WTC11 (cell line): ENCODE measurements at regions of chr4 and their contacts with region 1.

Region 1: DNA sequence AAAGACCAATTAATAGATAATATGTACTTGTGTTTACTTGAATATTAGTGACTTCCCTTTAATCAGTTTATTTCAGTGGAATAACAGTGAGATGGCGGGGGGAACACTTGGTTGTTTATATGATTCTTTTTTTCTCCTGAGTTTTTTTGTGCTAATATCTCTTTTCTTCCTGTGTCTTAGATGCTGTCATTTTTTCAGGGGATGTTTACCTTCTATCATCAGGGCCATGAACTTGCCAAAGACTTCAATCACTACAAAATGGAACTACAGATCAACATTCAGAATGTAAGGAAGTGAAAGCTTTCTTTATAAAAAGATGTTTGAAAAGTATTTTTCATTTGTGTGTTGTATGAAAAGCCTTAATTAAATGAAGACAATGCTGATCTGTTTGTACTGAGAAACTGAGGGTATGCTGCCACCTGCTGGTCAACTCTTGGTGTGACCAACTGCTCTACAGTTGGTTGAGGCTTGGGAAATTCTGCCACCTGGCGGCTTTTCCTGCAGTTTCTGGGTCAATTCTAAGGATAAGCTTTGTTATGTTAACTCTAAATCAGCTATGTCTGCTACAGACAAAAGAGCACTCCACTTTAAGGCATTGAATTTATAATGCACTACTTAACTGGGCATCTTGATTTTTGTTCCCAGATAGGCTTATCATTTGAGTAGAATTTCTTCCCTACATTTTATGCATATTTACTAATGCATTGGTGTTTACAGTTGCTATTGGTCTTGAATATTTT is 134.8 kb downstream of the ARHGAP10 start:
- DNase-seq: peak; percentile 95
- ATAC-seq: peak; percentile 87
- H3K4me3 Mint-ChIP-seq: peak overlapping the region; percentile 0; the same call in 1 of the 2 replicates
- H3K27ac Mint-ChIP-seq: peak overlapping the region; percentile 75
- H3K4me1 Mint-ChIP-seq: peaks cover 43% of the 10 kb centered on the region
- H3K27me3 Mint-ChIP-seq: no peaks in the 10 kb centered on the region
- CTCF ChIP-seq: peak; percentile 97

Region 2: DNA sequence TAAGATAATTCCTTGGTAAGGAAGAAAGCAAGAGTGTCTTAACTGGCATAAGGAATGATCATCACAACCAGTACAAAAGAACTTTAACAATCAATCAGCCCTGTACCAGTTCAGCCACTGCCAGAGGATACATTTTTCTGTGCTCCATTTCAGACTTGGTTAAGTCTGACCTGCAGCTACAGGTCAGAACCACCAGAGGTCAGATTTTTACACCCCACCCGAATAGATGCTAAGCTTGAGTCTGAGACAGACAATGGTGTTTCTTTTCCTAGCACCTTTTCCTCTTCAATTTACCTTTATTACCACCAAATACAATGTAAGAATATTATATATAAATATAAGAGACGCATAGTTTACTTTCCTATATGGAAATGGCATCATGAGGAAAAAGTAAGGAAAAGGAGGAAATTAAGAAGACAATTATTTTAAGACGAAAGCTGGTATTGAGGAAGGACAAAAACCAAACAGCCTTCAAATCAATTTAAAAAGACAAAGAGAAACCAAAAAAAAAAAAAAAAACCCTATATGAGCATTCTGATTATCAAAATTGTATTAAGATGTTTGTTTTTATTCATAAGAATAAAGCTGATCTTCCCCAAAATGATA is 705.7 kb before region 1 on chr4:
- CTCF ChIA-PET with region 1: interaction called, 15 read pairs
- POLR2A ChIA-PET with region 1: no interaction called
- DNase-seq: no peak
- ATAC-seq: peak; percentile 69
- H3K4me3 Mint-ChIP-seq: no peak overlapping the region
- H3K27ac Mint-ChIP-seq: no peak overlapping the region
- H3K4me1 Mint-ChIP-seq: peaks cover 16% of the 10 kb centered on the region
- H3K27me3 Mint-ChIP-seq: no peaks in the 10 kb centered on the region
- CTCF ChIP-seq: peak; percentile 63

Region 3: DNA sequence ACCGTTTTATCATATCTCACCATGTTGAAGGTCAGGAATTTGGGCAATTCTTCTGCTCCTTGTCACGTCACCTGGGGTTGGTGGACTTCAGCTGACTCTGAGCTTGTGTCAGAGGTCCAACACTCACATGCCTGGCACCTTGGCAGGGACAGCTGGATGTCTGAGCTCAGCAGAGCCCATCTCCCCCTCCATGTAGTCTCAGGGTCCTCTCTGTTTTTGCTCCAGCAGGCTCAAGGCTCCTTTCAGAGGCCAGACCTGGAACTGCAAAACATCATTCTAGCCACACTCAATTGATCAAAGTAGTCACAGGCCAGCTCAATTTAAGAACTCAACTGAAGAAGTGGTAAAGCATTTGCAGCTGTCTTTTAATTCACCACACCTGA is 340.4 kb before region 1 on chr4:
- CTCF ChIA-PET with region 1: interaction called, 13 read pairs
- POLR2A ChIA-PET with region 1: no interaction called
- DNase-seq: no peak
- ATAC-seq: peak; percentile 93
- H3K4me3 Mint-ChIP-seq: no peak overlapping the region
- H3K27ac Mint-ChIP-seq: peak overlapping the region; percentile 66; the same call in 1 of the 2 replicates
- H3K4me1 Mint-ChIP-seq: no peaks in the 10 kb centered on the region
- H3K27me3 Mint-ChIP-seq: no peaks in the 10 kb centered on the region
- CTCF ChIP-seq: no peak

Region 4: GRCh38 chr4:147617173-147617840 is 249.4 kb before region 1 on chr4 and contains the start of gene TMEM184C:
- CTCF ChIA-PET with region 1: interaction called, 40 read pairs
- POLR2A ChIA-PET with region 1: interaction called, 6 read pairs
- DNase-seq: peak; percentile 98
- ATAC-seq: peak; percentile 98
- H3K4me3 Mint-ChIP-seq: peak within 1 kb of the TSS; percentile 97
- H3K27ac Mint-ChIP-seq: peak within 1 kb of the TSS; percentile 98
- H3K4me1 Mint-ChIP-seq: peaks cover 20% of the 10 kb centered on the region
- H3K27me3 Mint-ChIP-seq: no peaks in the 10 kb centered on the region; the same call in 1 of the 2 replicates
- CTCF ChIP-seq: no peak
- total RNA-seq, gene TMEM184C: 42.3 to 43.7 TPM (median 43.4 TPM) in 3 replicates

Region 5: GRCh38 chr4:147645099-147645498 is 221.6 kb before region 1 on chr4:
- CTCF ChIA-PET with region 1: interaction called, 21 read pairs
- POLR2A ChIA-PET with region 1: no interaction called
- DNase-seq: no peak
- ATAC-seq: no peak
- H3K4me3 Mint-ChIP-seq: no peak overlapping the region
- H3K27ac Mint-ChIP-seq: no peak overlapping the region
- H3K4me1 Mint-ChIP-seq: peaks cover 19% of the 10 kb centered on the region
- H3K27me3 Mint-ChIP-seq: no peaks in the 10 kb centered on the region
- CTCF ChIP-seq: no peak

Region 6: DNA sequence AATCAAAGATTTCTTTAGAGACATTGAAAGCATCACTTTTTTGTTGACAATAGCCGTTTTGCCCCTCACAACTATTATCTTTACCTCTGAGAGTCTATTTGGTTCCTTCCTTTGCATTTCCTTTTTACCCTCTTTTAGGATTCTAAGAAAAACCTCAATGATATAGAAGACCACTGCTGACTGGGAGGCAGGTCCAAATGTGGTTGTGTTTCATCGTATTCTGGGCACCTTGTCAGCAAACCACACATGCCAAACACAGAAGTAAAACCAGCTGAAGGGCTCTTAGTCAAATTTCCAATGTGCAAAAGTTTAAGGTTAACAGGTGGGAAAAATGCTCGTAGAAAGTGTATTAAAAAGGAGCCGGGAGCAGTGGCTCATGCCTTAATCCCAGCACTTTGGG is 177.6 kb before region 1 on chr4:
- CTCF ChIA-PET with region 1: interaction called, 34 read pairs
- POLR2A ChIA-PET with region 1: no interaction called
- DNase-seq: no peak
- ATAC-seq: no peak
- H3K4me3 Mint-ChIP-seq: no peak overlapping the region
- H3K27ac Mint-ChIP-seq: no peak overlapping the region; the same call in 1 of the 2 replicates
- H3K4me1 Mint-ChIP-seq: peaks cover 9% of the 10 kb centered on the region
- H3K27me3 Mint-ChIP-seq: peaks cover 4% of the 10 kb centered on the region; the same call in 1 of the 2 replicates
- CTCF ChIP-seq: no peak

Region 7: GRCh38 chr4:147786031-147786430 is 80.7 kb before region 1 on chr4:
- CTCF ChIA-PET with region 1: interaction called, 12 read pairs
- POLR2A ChIA-PET with region 1: no interaction called
- DNase-seq: no peak
- ATAC-seq: peak; percentile 43; the same call in 1 of the 2 replicates
- H3K4me3 Mint-ChIP-seq: no peak overlapping the region
- H3K27ac Mint-ChIP-seq: 0 out of 2 replicates have a peak overlapping the region, but pooled peaks have one; percentile 10
- H3K4me1 Mint-ChIP-seq: peaks cover 15% of the 10 kb centered on the region
- H3K27me3 Mint-ChIP-seq: no peaks in the 10 kb centered on the region
- CTCF ChIP-seq: no peak

Region 8: DNA sequence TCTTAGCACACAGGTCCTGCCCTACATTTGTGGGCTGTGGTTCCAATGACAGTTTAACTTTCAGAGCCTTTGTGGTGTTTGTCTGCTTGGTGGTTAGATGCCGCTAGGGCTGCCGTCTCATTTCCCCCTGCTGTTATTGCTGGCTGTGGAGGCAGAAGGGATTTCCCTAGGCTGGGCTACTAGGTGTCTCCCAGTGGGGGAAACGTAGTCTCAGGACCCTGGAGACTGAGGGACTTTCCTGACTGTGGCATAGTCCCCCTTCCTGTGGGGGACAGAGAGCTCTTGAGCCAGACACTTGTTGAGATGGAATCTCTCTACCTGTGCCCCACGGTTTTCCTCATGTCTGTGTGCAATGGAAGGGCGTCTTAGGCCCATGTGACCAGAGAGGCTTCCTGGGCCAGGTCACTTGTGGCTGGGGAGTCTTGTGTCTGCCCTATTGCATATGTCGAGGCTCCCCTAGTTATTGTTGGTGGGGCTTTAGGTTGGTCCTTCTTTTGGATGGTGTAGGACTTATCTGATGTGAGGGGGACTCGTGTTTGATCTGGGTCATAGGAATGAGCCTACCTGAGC is 66.6 kb before region 1 on chr4:
- CTCF ChIA-PET with region 1: no interaction called
- POLR2A ChIA-PET with region 1: no interaction called
- DNase-seq: no peak
- ATAC-seq: peak; percentile 67
- H3K4me3 Mint-ChIP-seq: no peak overlapping the region
- H3K27ac Mint-ChIP-seq: 0 out of 2 replicates have a peak overlapping the region, but pooled peaks have one; percentile 51
- H3K4me1 Mint-ChIP-seq: peaks cover 14% of the 10 kb centered on the region
- H3K27me3 Mint-ChIP-seq: no peaks in the 10 kb centered on the region
- CTCF ChIP-seq: no peak

Region 9: DNA sequence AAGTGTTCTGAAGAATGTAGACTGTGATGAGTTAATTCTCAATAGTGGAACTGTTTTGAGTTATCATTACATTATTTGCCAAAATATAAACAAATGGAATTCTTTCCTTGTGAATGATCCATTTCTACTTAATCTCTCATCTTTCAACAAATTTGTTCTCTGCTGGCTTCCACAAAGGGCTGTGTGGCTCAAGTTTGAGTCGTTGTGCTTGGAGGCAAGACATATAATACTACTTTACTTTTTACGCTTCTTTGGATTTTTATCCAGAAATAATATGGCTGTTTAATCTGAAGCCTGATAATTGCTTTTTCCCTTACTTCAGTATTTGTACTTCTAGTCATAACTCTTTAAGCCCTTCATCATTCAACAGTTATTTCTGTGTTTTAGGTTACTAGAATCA is 34.7 kb after region 1 on chr4:
- CTCF ChIA-PET with region 1: no interaction called
- POLR2A ChIA-PET with region 1: no interaction called
- DNase-seq: no peak
- ATAC-seq: no peak
- H3K4me3 Mint-ChIP-seq: no peak overlapping the region
- H3K27ac Mint-ChIP-seq: no peak overlapping the region
- H3K4me1 Mint-ChIP-seq: no peaks in the 10 kb centered on the region
- H3K27me3 Mint-ChIP-seq: no peaks in the 10 kb centered on the region
- CTCF ChIP-seq: no peak

Region 10: GRCh38 chr4:148007303-148007702 is 140.6 kb after region 1 on chr4:
- CTCF ChIA-PET with region 1: no interaction called
- POLR2A ChIA-PET with region 1: no interaction called
- DNase-seq: no peak
- ATAC-seq: no peak
- H3K4me3 Mint-ChIP-seq: no peak overlapping the region
- H3K27ac Mint-ChIP-seq: no peak overlapping the region; the same call in 1 of the 2 replicates
- H3K4me1 Mint-ChIP-seq: peaks cover 15% of the 10 kb centered on the region
- H3K27me3 Mint-ChIP-seq: no peaks in the 10 kb centered on the region
- CTCF ChIP-seq: no peak